SK-N-SH (cell line): ENCODE measurements at regions of chr3 and their contacts with region 1.

Region 1: DNA sequence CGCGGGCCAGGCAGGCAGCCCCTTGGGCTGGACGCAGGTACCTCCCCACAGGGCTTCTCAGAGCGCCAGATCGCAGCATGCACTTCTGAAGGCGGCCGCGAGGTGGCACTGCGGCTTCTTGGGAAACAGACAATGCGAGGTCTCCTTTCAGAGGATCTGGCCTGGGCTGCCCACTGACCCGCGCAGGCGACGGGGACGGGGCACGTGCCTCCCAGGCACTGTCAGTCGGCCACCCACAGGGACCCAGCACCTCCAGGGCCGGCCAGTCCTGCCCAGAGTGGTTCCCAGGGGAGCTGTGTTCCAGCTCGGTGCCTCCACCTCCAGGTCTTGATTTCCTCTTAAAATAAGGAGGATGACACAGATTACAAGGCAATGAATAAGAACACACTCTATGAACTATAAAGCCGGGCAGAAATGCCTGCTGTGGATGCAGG is 24.4 kb upstream of the TXNRD3 start:
- DNase-seq: peak; percentile 88
- H3K4me3 ChIP-seq: peak overlapping the region in 1 of 2 experiments; percentile 29; a peak in 1 of 4 replicates
- H3K27ac ChIP-seq: peak overlapping the region; percentile 9 to 91; a peak in 3 of 4 replicates
- H3K4me1 ChIP-seq: peaks cover 15 to 52% of the 10 kb centered on the region in 2 experiments; a peak in 3 of 4 replicates
- H3K27me3 ChIP-seq: no peaks in the 10 kb centered on the region
- CTCF ChIP-seq: peak; percentile 87
- EP300 ChIP-seq: peak in 1 of 2 experiments; percentile 13; a peak in 1 of 4 replicates
- RAD21 ChIP-seq: peak; percentile 91

Region 2: GRCh38 chr3:126419886-126420786 is 259.2 kb before region 1 on chr3:
- CTCF ChIA-PET with region 1: no interaction called
- POLR2A ChIA-PET with region 1: no interaction called
- DNase-seq: peak; percentile 14
- H3K4me3 ChIP-seq: no peak overlapping the region
- H3K27ac ChIP-seq: no peak overlapping the region
- H3K4me1 ChIP-seq: peaks cover 0 to 12% of the 10 kb centered on the region in 2 experiments; a peak in 1 of 4 replicates
- H3K27me3 ChIP-seq: no peaks in the 10 kb centered on the region
- CTCF ChIP-seq: no peak
- EP300 ChIP-seq: no peak
- RAD21 ChIP-seq: no peak

Region 3: GRCh38 chr3:126522363-126522788 is 157.0 kb before region 1 on chr3:
- CTCF ChIA-PET with region 1: interaction called, 11 read pairs
- POLR2A ChIA-PET with region 1: no interaction called
- DNase-seq: peak; percentile 88
- H3K4me3 ChIP-seq: peak overlapping the region in 1 of 2 experiments; percentile 18; a peak in 1 of 4 replicates
- H3K27ac ChIP-seq: no peak overlapping the region
- H3K4me1 ChIP-seq: peaks cover 0 to 18% of the 10 kb centered on the region in 2 experiments; a peak in 1 of 4 replicates
- H3K27me3 ChIP-seq: no peaks in the 10 kb centered on the region; the same call in 1 of the 2 replicates
- CTCF ChIP-seq: peak; percentile 79
- EP300 ChIP-seq: no peak
- RAD21 ChIP-seq: peak; percentile 83

Region 4: DNA sequence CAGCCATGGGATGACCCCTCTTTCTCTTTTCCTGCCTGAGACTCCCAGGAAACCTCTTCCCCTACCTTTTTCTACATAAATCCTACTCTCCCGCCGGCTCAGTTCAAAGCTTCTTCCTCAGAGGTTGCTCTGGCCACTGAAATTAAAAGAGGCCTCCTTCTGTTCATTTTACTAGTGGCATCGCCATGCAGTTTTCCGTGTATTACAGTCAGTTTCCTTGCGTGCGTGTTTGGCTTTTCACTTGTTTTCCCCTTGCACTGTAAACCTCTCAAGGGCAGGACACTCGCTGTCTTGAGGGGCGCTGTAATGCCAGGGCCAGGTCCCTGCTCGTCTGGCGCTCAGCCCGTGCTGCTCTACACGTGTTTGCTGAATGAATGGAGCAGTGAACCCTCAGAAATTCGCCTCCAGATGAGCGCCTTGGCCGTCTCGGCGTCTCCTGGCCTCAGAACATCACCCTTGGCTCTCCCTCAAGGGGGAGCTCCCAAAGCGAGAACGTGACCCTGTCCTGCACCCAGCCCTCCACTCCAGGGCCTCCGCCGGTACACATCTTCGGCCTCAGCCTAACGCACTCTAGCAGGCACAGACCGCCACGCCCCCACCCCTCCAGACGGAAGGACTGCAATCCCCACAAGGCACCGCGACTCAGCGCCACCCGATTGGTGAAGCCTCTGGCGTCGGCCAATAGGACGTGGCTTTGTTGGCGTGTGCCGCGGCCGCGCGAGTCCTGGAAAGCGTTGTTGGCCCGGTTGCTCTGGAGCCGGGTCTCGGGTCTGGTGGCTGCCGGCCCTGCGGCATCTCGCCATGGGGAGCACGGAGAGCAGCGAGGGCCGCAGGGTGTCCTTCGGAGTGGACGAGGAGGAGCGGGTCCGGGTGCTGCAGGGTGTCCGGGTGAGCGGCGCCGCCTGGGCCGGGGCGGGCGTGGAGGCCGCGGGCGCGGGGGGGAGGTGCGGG is 24.5 kb after region 1 on chr3 and contains the start of gene CHCHD6:
- CTCF ChIA-PET with region 1: interaction called, 41 read pairs
- POLR2A ChIA-PET with region 1: interaction called, 6 read pairs
- DNase-seq: peak; percentile 99
- H3K4me3 ChIP-seq: peak within 1 kb of the TSS; percentile 68 to 88
- H3K27ac ChIP-seq: peak within 1 kb of the TSS in 1 of 2 experiments; percentile 60; a peak in 2 of 4 replicates
- H3K4me1 ChIP-seq: peaks cover 6 to 20% of the 10 kb centered on the region in 2 experiments; a peak in 1 of 4 replicates
- H3K27me3 ChIP-seq: 0 out of 2 replicates have a peak, but pooled peaks cover 3% of the 10 kb centered on the region
- CTCF ChIP-seq: peak; percentile 29
- EP300 ChIP-seq: no peak
- RAD21 ChIP-seq: peak; percentile 29
- polyA plus RNA-seq, gene CHCHD6: 42.5 and 45.0 TPM in 2 replicates

Region 5: DNA sequence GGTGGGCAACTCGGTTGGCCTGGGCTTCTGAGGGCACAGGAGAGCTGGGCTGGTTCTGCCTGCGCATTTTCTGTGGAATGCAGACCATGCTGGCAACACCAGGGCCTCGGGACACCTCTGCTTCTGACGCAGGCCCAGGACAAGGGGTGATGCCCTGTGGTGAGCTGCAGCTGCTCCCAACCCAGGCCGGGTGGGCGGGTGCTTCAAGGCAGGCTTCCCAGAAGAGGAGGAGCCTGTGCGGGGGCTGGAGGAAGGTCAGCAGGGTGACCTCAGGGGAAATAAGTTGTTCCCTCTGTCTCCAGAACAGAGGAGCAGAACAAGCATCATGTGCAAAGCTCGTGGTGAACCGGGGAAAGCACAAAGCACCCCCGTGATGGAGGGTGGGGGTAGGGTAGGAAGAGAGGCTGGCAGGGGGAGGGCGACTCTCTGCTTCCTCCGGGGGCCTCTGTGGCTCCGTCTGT is 292.6 kb after region 1 on chr3:
- CTCF ChIA-PET with region 1: interaction called, 10 read pairs
- POLR2A ChIA-PET with region 1: no interaction called
- DNase-seq: peak; percentile 83
- H3K4me3 ChIP-seq: no peak overlapping the region
- H3K27ac ChIP-seq: peak overlapping the region in 1 of 2 experiments; percentile 60; a peak in 1 of 4 replicates
- H3K4me1 ChIP-seq: peaks cover 0 to 18% of the 10 kb centered on the region in 2 experiments; a peak in 1 of 4 replicates
- H3K27me3 ChIP-seq: no peaks in the 10 kb centered on the region
- CTCF ChIP-seq: no peak
- EP300 ChIP-seq: no peak
- RAD21 ChIP-seq: no peak

Region 6: DNA sequence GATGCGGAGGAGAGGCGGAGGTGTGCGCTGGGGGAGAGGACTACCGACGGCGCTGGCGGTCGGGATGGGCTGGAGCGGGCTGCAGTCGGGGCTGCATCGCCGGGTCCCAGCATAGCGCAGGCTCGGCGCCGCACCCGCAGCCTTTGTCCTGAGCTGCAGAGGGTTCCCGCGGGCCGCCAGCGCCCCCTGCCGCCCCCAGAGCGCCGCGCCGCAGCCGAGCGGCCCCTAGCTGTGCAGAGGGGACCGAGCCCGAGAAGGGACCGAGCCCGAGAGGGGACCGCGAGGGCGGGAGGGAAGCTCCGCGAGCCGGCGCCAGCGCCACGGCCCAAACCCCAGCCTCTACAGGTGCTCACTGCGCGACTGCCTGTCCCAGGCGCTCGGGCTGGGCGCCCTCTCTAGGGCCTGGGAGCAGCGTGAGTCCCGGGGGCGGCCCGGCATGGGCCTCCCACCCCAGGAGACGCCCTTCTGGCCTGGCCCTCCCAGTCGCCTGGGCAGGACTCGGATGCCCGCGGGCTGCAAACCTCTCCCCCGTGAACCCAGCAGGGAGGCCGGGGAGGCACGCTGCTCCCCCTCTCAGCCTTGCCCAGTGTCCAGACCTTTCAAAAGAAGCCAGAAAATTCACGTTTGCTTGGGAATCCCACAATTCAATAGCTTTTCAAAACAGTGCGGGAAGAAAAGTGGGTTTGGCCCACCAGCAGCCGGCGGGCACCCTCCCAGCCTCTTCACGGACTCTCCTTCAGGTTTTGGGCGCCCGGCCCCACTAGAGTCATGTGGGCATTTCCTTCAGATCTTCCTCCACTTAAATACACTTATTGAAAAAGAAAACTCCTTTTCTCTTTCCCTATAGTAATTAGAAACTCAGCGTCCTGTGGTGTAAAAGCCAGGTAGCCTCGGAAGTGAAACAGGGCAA is 776.5 kb after region 1 on chr3:
- CTCF ChIA-PET with region 1: interaction called, 23 read pairs
- POLR2A ChIA-PET with region 1: interaction called, 3 read pairs
- DNase-seq: peak; percentile 98
- H3K4me3 ChIP-seq: peak overlapping the region; percentile 40 to 58; a peak in 3 of 4 replicates
- H3K27ac ChIP-seq: no peak overlapping the region; a peak in 1 of 4 replicates
- H3K4me1 ChIP-seq: peaks cover 7 to 13% of the 10 kb centered on the region in 2 experiments; a peak in 2 of 4 replicates
- H3K27me3 ChIP-seq: no peaks in the 10 kb centered on the region
- CTCF ChIP-seq: peak; percentile 81
- EP300 ChIP-seq: peak in 1 of 2 experiments; percentile 19; a peak in 1 of 4 replicates
- RAD21 ChIP-seq: peak; percentile 91

Region 7: GRCh38 chr3:127544192-127544802 is 865.0 kb after region 1 on chr3:
- CTCF ChIA-PET with region 1: interaction called, 35 read pairs
- POLR2A ChIA-PET with region 1: interaction called, 3 read pairs
- DNase-seq: peak; percentile 91
- H3K4me3 ChIP-seq: no peak overlapping the region; a peak in 1 of 4 replicates
- H3K27ac ChIP-seq: no peak overlapping the region
- H3K4me1 ChIP-seq: peaks cover 0 to 29% of the 10 kb centered on the region in 2 experiments; a peak in 1 of 4 replicates
- H3K27me3 ChIP-seq: no peaks in the 10 kb centered on the region
- CTCF ChIP-seq: peak; percentile 75
- EP300 ChIP-seq: no peak
- RAD21 ChIP-seq: peak; percentile 81